Psoas muscle (tissue), 8 donors: ENCODE measurements at regions of chr11 and their contacts with region 1.

Region 1: GRCh38 chr11:46593550-46594373 is at the start of gene AMBRA1:
- DNase-seq: peak; percentile 86 to 91
- ATAC-seq: peak; percentile 93 to 97 (median 95)
- H3K4me3 ChIP-seq: peak within 1 kb of the TSS; percentile 99
- H3K27ac ChIP-seq: peak within 1 kb of the TSS; percentile 79
- H3K4me1 ChIP-seq: peaks cover 29% of the 10 kb centered on the region
- H3K27me3 ChIP-seq: no peaks in the 10 kb centered on the region
- CTCF ChIP-seq: no peak
- total RNA-seq, gene AMBRA1: 10.8 to 23.5 (median 18.5) TPM

Region 2: GRCh38 chr11:46554205-46555055 is 39.3 kb before region 1 on chr11:
- intact Hi-C with region 1: loop called in 1 of 2 experiments (anchors 5 kb)
- DNase-seq: no peak
- ATAC-seq: peak; percentile 80 to 93 (median 86)
- H3K4me3 ChIP-seq: peak overlapping the region; percentile 3
- H3K27ac ChIP-seq: peak overlapping the region; percentile 83
- H3K4me1 ChIP-seq: peaks cover 35% of the 10 kb centered on the region
- H3K27me3 ChIP-seq: no peaks in the 10 kb centered on the region
- CTCF ChIP-seq: no peak

Region 3: GRCh38 chr11:46574656-46575055 is 19.1 kb before region 1 on chr11:
- intact Hi-C with region 1: no loop called
- DNase-seq: no peak
- ATAC-seq: no peak
- H3K4me3 ChIP-seq: no peak overlapping the region
- H3K27ac ChIP-seq: no peak overlapping the region
- H3K4me1 ChIP-seq: peaks cover 9% of the 10 kb centered on the region
- H3K27me3 ChIP-seq: no peaks in the 10 kb centered on the region
- CTCF ChIP-seq: no peak